ENCODE measurements at regions of chr5 and their contacts with region 1.

Region 1: DNA sequence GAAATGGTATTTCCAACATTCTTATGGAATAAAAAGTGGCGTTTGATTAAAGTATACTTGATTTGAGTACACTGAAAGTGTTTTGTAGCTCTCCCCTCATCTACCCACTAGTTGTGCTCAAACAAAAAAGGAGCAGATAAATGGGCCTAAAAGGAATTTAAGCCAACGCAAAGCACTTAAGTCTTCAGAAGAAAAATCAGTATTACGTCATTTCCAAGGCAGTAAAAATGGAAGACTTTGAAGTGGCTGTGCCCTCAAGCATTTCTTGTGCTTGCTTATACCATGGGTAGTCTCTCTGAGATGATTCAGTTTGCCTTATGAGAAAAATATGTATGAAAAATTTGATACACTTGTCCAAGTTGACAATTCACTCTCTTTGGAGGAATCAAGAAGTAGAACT is 279.9 kb upstream of the CD180 start:
- DNase-seq: no peak
- ATAC-seq: no peak
- H3K4me3 ChIP-seq: no peak overlapping the region
- H3K27ac ChIP-seq: peak overlapping the region; percentile 87 to 95 (median 90)
- H3K4me1 ChIP-seq: peaks cover 4 to 11% of the 10 kb centered on the region in 2 donors
- H3K27me3 ChIP-seq: no peaks in the 10 kb centered on the region
- CTCF ChIP-seq: no peak
- POLR2A ChIP-seq: no peak

Region 2: DNA sequence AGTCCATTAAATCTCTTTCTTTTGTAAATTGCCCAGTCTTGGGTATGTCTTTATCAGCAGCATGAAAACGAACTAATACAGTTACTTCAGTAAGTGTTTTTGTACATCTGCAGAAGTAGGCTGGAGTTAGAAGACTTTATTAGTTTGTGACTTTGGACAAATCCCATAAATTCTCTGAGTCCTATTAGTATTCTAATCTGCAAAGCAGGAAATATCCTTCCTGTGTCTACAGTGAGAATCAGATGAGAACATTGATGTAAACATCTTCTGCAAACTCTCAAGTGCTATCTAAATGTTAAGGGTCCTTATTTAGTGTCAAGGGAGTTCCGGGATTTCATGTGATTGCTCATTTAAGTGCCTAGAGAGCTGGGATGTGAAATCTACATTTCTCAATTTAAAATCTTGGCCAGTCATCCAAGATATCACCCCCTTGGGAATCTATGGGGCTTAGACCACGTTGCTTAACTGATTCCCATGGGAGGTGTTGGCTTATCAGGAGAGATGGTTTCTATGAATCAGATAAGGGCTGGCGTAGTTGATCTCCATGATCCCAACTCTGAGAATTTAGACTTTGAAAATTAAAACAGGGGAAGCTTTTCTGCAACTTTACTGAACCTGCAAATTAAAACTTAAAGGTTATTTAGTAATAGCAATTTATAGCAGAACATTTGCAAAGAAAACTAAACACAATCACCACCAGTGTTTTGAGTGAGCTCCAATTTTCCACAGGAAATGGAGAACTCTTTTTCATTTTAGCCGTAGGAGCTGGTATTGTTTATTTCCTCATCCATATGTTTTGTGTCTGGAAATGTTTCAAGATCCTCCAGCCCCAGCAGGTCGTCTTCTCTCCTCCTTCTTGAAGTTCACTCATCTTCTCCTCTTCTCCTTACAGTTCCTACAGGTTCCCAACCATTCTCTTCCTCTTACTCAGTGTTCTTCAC is 38.4 kb before region 1 on chr5:
- in situ Hi-C with region 1: no loop called
- intact Hi-C with region 1: no loop called
- DNase-seq: no peak
- ATAC-seq: no peak
- H3K4me3 ChIP-seq: no peak overlapping the region
- H3K27ac ChIP-seq: no peak overlapping the region
- H3K4me1 ChIP-seq: no peaks in the 10 kb centered on the region
- H3K27me3 ChIP-seq: no peaks in the 10 kb centered on the region
- CTCF ChIP-seq: no peak
- POLR2A ChIP-seq: no peak

Region 3: GRCh38 chr5:67605730-67606585 is 129.4 kb after region 1 on chr5:
- in situ Hi-C with region 1: no loop called
- intact Hi-C with region 1: no loop called
- DNase-seq: no peak
- ATAC-seq: no peak
- H3K4me3 ChIP-seq: no peak overlapping the region
- H3K27ac ChIP-seq: no peak overlapping the region
- H3K4me1 ChIP-seq: no peaks in the 10 kb centered on the region
- H3K27me3 ChIP-seq: no peaks in the 10 kb centered on the region
- CTCF ChIP-seq: no peak
- POLR2A ChIP-seq: no peak

Region 4: GRCh38 chr5:67677422-67677970 is 201.0 kb after region 1 on chr5:
- in situ Hi-C with region 1: loop called in 1 of 4 experiments (anchors 25 kb)
- intact Hi-C with region 1: loop called (anchors 5 kb)
- DNase-seq: peak; percentile 92 to 96
- ATAC-seq: peak; percentile 97 to 99
- H3K4me3 ChIP-seq: no peak overlapping the region
- H3K27ac ChIP-seq: peak overlapping the region; percentile 81 to 82 (median 81)
- H3K4me1 ChIP-seq: peaks cover 20 to 26% of the 10 kb centered on the region in 2 donors
- H3K27me3 ChIP-seq: no peaks in the 10 kb centered on the region
- CTCF ChIP-seq: no peak
- POLR2A ChIP-seq: peak in 1 of 2 donors; percentile 30

Region 5: GRCh38 chr5:67773411-67774266 is 297.1 kb after region 1 on chr5:
- in situ Hi-C with region 1: no loop called
- intact Hi-C with region 1: loop called (anchors 5 kb)
- DNase-seq: no peak
- ATAC-seq: no peak
- H3K4me3 ChIP-seq: no peak overlapping the region
- H3K27ac ChIP-seq: peak overlapping the region; percentile 74 to 82 (median 78)
- H3K4me1 ChIP-seq: peaks cover 30 to 32% of the 10 kb centered on the region in 2 donors
- H3K27me3 ChIP-seq: no peaks in the 10 kb centered on the region
- CTCF ChIP-seq: no peak
- POLR2A ChIP-seq: no peak

Region 6: GRCh38 chr5:68046445-68046844 is 569.9 kb after region 1 on chr5:
- in situ Hi-C with region 1: no loop called
- intact Hi-C with region 1: loop called (anchors 5 kb)
- DNase-seq: peak; percentile 54 to 84
- ATAC-seq: peak; percentile 97 to 100
- H3K4me3 ChIP-seq: no peak overlapping the region
- H3K27ac ChIP-seq: peak overlapping the region; percentile 63 to 74 (median 64)
- H3K4me1 ChIP-seq: peaks cover 0 to 3% of the 10 kb centered on the region in 2 donors
- H3K27me3 ChIP-seq: no peaks in the 10 kb centered on the region
- CTCF ChIP-seq: peak in 1 of 5 experiments; percentile 22
- POLR2A ChIP-seq: no peak

Region 7: GRCh38 chr5:68225188-68225910 is 748.8 kb after region 1 on chr5:
- in situ Hi-C with region 1: loop called in 1 of 4 experiments (anchors 25 kb)
- intact Hi-C with region 1: loop called (anchors 2 kb)
- DNase-seq: peak; percentile 63 to 75
- ATAC-seq: peak; percentile 84 to 90
- H3K4me3 ChIP-seq: peak overlapping the region in 2 of 4 donors; percentile 1 to 9
- H3K27ac ChIP-seq: peak overlapping the region; percentile 51 to 63 (median 54)
- H3K4me1 ChIP-seq: peaks cover 59 to 72% of the 10 kb centered on the region in 2 donors
- H3K27me3 ChIP-seq: no peaks in the 10 kb centered on the region
- CTCF ChIP-seq: no peak
- POLR2A ChIP-seq: no peak